Motor neuron (in vitro differentiated cells): ENCODE measurements at regions of chr9 and their contacts with region 1.

Region 1: DNA sequence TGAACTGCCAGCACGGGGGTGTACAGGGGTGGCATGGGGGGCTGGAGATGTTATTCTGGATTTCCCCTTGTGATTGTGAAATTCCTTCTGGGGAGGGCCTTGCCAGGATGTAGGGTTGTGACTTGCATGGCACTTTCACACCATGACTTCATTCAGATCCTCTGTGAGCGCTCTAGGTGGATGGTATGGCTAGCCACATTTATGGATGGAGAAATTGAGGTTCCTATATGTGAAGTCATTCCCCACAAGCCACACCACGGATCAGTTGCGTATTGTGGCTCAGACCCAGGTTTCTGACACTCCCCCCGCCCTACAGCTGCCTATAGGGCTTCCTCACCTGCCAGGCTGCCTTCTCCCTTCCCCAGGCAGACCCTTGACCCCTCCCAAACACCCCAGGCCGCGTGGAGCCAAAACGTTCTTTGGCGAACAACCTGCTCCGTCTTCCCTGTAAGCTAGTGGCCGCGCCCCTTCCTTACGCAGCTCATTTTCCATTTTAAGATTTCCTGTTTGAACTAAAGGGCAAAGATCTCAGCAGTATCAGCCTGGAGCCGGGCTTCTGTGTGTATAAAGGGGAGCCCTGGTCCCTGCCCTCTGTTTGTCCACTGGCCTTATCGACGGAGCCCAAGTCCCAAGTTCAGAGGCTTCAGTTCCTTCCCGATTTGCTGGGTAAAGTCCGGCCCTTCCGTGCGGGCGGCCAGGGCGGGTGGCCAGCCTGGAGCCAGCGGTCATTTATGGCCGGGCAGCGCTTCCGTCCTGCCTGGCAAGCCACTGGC is 97.8 kb upstream of the KLF4 start:
- ATAC-seq: no peak
- H3K4me3 ChIP-seq: no peak overlapping the region
- H3K27ac ChIP-seq: no peak overlapping the region
- H3K4me1 ChIP-seq: no peaks in the 10 kb centered on the region

Region 2: DNA sequence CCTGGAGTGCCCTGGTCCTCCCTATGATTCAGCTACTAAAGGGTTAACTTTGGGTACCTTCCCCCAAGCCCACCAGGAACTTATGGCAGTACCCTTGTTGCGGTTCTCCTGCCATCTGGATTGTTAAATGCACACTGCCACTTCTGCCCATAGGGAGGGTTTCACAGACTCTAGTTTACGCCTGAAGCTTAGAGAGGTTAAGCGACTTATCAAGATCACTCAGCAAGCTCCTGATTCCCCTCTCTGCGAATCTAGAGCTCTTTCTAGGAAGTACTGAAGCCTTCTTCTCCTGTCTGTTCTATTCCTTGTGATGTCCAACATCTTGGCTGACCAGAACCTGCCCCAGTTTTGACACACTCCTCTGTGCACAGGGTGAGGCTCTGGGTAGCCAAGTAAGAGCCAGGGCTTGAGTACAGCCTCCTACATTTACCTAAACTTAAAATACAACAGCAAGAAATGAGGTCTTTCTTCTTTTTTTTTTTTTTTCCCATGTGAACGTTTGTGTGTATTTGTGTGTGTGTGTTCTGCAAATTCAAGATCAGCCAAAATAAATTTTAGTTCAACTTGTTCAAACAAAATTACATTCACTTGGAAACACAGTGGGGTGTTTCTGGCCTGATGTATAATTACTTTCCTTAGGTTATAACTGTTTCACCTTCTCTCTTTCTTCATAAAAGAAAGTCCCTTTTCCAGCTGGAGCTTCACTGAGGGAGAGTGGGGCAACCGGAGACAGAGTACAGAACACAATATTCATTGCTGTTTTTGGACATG is 69.2 kb before region 1 on chr9:
- in situ Hi-C with region 1: no loop called
- ATAC-seq: peak in 1 of 8 experiments; percentile 69
- H3K4me3 ChIP-seq: no peak overlapping the region
- H3K27ac ChIP-seq: no peak overlapping the region
- H3K4me1 ChIP-seq: no peaks in the 10 kb centered on the region

Region 3: DNA sequence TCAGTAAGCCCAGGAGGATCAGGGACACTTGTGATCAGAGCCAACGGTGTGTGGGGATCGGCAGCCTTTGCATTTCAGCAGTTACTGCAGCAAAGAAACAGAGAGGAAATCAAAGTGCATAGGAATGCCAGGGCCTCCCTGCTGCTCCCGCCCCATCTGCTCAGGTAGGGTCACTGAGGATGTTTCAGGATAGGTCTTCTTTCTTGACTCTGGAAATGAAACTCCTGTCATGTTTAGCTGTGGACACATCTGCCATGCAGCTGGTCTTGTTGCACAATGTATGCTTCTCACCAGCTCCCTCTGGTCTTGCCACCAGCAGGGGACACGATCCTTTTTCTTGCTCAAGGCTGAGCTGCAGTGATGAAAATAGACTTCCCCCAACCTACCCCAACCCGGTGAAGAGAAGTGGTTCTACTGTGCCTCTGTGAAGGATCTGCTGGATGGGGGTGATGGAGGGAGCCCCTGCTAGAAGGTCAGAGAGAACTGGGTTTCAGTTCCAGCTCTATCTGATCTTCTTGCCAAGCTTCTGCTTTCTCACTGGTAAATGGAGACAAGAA is 87.4 kb after region 1 on chr9:
- in situ Hi-C with region 1: loop called in 1 of 9 experiments (anchors 25 kb)
- ATAC-seq: peak in 5 of 8 experiments; percentile 8 to 86 (median 78)
- H3K4me3 ChIP-seq: no peak overlapping the region
- H3K27ac ChIP-seq: peak overlapping the region in 1 of 2 donors; percentile 33
- H3K4me1 ChIP-seq: peaks cover 8 to 17% of the 10 kb centered on the region in 2 donors